ENCODE measurements at regions of chr3 and their contacts with region 1.

Region 1: DNA sequence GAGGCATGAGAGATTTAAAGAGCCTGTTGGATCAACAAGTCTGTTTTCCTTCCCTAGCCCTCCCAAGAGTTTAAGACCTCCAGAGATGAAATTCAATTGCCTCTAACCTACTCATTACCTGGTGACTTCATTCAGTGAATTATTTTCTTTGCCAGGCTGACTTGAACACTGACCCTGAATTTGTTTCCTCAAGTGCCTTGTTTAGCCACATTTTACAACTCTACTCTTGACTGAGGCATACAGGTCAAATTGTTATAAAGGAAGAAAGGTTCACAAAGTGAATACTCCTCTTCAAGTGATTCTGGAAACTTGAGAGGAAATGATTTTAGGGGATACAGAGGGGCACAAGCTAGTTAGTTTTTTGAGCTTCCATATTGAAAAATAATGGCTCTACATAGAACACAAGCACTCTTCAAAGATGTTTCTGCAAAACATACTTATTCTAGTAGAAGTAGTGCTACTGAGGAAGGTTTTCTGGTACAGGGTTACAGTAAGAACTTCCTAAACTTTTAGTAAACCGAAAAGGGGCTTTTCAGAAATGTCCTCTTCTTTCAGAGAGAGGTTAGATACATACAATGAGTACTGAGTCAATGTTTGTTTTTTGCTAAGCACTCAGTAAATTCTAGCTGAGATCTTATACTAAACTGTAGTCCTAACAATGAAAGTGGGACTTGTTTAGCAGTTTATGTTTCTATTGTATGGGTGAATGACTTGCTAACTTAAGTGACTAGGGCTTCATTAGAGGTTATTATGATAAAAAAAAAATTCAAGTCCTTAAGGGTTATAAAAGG is 137.4 kb upstream of the SATB1 start:
- DNase-seq: no peak
- ATAC-seq: no peak
- H3K4me3 ChIP-seq: no peak overlapping the region
- H3K27ac ChIP-seq: no peak overlapping the region
- H3K4me1 ChIP-seq: no peaks in the 10 kb centered on the region
- H3K27me3 ChIP-seq: no peaks in the 10 kb centered on the region
- CTCF ChIP-seq: no peak

Region 2: GRCh38 chr3:18237251-18238005 is 325.1 kb before region 1 on chr3:
- CTCF ChIA-PET with region 1: no interaction called
- POLR2A ChIA-PET with region 1: no interaction called
- in situ Hi-C with region 1: no loop called
- intact Hi-C with region 1: no loop called
- DNase-seq: no peak
- ATAC-seq: no peak
- H3K4me3 ChIP-seq: no peak overlapping the region
- H3K27ac ChIP-seq: no peak overlapping the region
- H3K4me1 ChIP-seq: no peaks in the 10 kb centered on the region
- H3K27me3 ChIP-seq: no peaks in the 10 kb centered on the region
- CTCF ChIP-seq: no peak

Region 3: GRCh38 chr3:18891641-18892040 is 329.1 kb after region 1 on chr3:
- CTCF ChIA-PET with region 1: interaction called, 10 read pairs
- POLR2A ChIA-PET with region 1: no interaction called
- in situ Hi-C with region 1: no loop called
- intact Hi-C with region 1: no loop called
- DNase-seq: no peak
- ATAC-seq: no peak
- H3K4me3 ChIP-seq: no peak overlapping the region
- H3K27ac ChIP-seq: no peak overlapping the region
- H3K4me1 ChIP-seq: no peaks in the 10 kb centered on the region
- H3K27me3 ChIP-seq: no peaks in the 10 kb centered on the region
- CTCF ChIP-seq: no peak

Measured in Panc1 (cell line).